ENCODE measurements at regions of chr15 and their contacts with region 1.

Region 1: DNA sequence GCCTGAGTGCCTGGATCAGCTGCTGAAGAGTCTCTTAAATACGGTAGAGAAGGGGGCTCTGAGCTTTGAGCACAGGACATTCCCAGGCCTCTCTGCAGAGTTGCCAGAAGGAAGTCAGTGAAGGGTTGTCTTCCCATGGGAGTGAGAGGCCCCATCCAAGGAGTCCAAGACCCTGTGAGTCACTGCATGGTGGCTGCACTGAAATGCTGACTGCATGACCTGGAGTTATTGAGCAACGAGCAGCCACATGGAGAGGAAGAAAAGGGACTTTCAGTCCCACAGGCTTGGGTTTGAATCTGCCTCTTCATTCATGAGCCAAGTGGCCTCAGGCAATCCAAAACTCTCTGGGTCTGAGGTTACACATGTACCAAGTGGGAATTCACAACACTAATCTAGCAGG is 69.6 kb upstream of the RASGRF1 start:
- DNase-seq: no peak
- H3K4me3 ChIP-seq: no peak overlapping the region
- H3K27ac ChIP-seq: no peak overlapping the region
- H3K4me1 ChIP-seq: no peaks in the 10 kb centered on the region
- H3K27me3 ChIP-seq: no peaks in the 10 kb centered on the region
- CTCF ChIP-seq: no peak

Region 2: GRCh38 chr15:78437762-78438302 is 722.4 kb before region 1 on chr15 and contains the start of gene IREB2:
- CTCF ChIA-PET with region 1: no interaction called
- POLR2A ChIA-PET with region 1: no interaction called
- intact Hi-C with region 1: no loop called
- DNase-seq: peak; percentile 99
- H3K4me3 ChIP-seq: peak within 1 kb of the TSS; percentile 83
- H3K27ac ChIP-seq: peak within 1 kb of the TSS; percentile 96
- H3K4me1 ChIP-seq: peaks cover 6% of the 10 kb centered on the region
- H3K27me3 ChIP-seq: no peaks in the 10 kb centered on the region
- CTCF ChIP-seq: no peak
- total RNA-seq, gene IREB2: 85.9 and 86.4 TPM in 2 replicates

Region 3: DNA sequence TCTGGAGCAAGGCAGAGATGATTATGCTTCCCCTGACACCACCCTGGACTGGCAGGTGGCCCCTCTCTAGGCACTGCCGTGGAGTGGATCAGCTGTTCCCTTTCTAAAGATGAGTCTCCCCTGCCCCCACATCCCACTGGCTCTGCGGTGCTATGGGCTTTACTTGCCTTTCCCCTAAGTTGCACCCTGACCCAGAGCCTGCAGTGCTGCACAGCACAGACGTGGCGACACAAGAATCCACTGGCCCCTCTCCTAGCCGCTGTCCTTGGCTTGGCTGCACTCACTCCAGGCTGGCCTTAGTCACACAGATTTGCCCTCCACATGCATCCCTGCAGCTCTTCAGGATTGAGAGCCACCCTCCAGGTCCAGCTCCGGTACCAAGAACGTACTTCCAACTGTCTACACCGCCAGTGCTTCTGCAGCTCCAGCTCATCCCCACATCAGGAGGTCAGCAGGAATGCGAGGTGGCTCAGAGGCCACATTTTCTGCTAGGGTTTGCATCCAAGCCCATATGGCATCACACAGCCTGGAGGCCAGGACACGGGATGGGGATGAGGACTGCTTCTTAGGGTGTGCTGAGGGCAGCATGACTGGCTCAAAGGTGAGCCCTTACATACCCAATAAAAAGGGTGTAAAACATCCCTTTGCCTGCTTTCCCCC is 12.7 kb after region 1 on chr15:
- CTCF ChIA-PET with region 1: no interaction called
- POLR2A ChIA-PET with region 1: interaction called, 13 read pairs
- intact Hi-C with region 1: no loop called
- DNase-seq: no peak
- H3K4me3 ChIP-seq: no peak overlapping the region
- H3K27ac ChIP-seq: no peak overlapping the region
- H3K4me1 ChIP-seq: peaks cover 11% of the 10 kb centered on the region
- H3K27me3 ChIP-seq: no peaks in the 10 kb centered on the region
- CTCF ChIP-seq: no peak